SK-N-SH (cell line): ENCODE measurements at regions of chr7 and their contacts with region 1.

Region 1: GRCh38 chr7:129664029-129665012 is 52.8 kb downstream of the NRF1 start:
- DNase-seq: peak; percentile 79
- H3K4me3 ChIP-seq: no peak overlapping the region
- H3K27ac ChIP-seq: peak overlapping the region; percentile 9 to 85; a peak in 3 of 4 replicates
- H3K4me1 ChIP-seq: peaks cover 5 to 9% of the 10 kb centered on the region in 2 experiments
- H3K27me3 ChIP-seq: no peaks in the 10 kb centered on the region
- CTCF ChIP-seq: peak; percentile 93
- EP300 ChIP-seq: no peak
- RAD21 ChIP-seq: peak; percentile 100

Region 2: GRCh38 chr7:129676017-129676897 is 11.9 kb after region 1 on chr7:
- CTCF ChIA-PET with region 1: interaction called, 16 read pairs
- POLR2A ChIA-PET with region 1: no interaction called
- DNase-seq: no peak
- H3K4me3 ChIP-seq: no peak overlapping the region
- H3K27ac ChIP-seq: no peak overlapping the region
- H3K4me1 ChIP-seq: no peaks in the 10 kb centered on the region
- H3K27me3 ChIP-seq: no peaks in the 10 kb centered on the region
- CTCF ChIP-seq: no peak
- EP300 ChIP-seq: no peak
- RAD21 ChIP-seq: no peak